ENCODE measurements at regions of chrX and their contacts with region 1.

Region 1: DNA sequence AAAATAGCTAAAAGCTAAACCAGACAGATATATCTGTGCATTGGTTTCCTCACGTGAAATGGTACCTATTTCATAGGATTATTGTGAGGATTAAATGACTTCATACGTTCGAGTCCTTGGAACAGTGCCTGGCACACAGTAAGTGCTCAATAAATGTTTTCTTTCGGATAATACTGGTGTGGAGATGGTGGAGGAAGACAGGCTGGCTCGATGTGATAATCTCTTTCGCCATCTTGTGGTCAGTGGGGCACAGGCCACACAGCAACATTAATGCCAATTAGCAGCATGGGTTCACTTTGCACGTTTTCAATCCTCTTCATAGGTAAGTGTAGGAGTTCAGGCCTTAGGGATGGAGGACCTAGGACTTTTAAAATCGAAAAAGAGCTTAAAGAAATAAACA is 9.3 kb downstream of the PAGE4 start:
- DNase-seq: no peak
- H3K4me3 ChIP-seq: no peak overlapping the region
- H3K27ac ChIP-seq: no peak overlapping the region
- H3K4me1 ChIP-seq: no peaks in the 10 kb centered on the region
- H3K27me3 ChIP-seq: no peaks in the 10 kb centered on the region
- CTCF ChIP-seq: peak; percentile 43 to 62 (median 60)
- EP300 ChIP-seq: no peak
- POLR2A ChIP-seq: no peak

Region 2: DNA sequence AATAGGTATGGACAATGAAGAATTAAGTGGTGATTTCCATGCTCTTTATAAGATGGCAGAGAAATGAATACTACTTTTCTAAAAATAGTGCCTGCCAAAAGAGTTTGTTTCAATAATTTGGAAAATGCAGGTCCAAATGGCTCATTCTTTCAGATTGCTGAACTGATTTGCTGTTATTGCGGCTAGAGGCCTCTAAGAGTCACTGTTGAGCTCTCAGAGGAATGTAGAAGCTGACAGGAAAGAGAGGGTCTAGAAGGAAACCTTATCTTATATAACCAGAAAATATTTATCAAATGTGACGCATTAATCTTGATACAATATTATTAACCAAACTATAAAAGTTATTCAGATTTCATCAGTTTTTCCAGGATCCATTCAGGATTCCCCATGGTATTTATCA is 76.9 kb before region 1 on chrX:
- intact Hi-C with region 1: loop called (anchors 5 kb)
- DNase-seq: no peak
- H3K4me3 ChIP-seq: no peak overlapping the region
- H3K27ac ChIP-seq: no peak overlapping the region
- H3K4me1 ChIP-seq: no peaks in the 10 kb centered on the region
- H3K27me3 ChIP-seq: peaks cover 0 to 6% (median 0%) of the 10 kb centered on the region in 4 donors
- CTCF ChIP-seq: peak; percentile 24 to 51 (median 28)
- EP300 ChIP-seq: no peak
- POLR2A ChIP-seq: no peak